Posterior cingulate gyrus (tissue), 11 donors: ENCODE measurements at regions of chr12 and their contacts with region 1.

Region 1: GRCh38 chr12:109775172-109775881 is 57.9 kb downstream of the TRPV4 start:
- DNase-seq: peak; percentile 65 to 97 (median 86)

Region 2: DNA sequence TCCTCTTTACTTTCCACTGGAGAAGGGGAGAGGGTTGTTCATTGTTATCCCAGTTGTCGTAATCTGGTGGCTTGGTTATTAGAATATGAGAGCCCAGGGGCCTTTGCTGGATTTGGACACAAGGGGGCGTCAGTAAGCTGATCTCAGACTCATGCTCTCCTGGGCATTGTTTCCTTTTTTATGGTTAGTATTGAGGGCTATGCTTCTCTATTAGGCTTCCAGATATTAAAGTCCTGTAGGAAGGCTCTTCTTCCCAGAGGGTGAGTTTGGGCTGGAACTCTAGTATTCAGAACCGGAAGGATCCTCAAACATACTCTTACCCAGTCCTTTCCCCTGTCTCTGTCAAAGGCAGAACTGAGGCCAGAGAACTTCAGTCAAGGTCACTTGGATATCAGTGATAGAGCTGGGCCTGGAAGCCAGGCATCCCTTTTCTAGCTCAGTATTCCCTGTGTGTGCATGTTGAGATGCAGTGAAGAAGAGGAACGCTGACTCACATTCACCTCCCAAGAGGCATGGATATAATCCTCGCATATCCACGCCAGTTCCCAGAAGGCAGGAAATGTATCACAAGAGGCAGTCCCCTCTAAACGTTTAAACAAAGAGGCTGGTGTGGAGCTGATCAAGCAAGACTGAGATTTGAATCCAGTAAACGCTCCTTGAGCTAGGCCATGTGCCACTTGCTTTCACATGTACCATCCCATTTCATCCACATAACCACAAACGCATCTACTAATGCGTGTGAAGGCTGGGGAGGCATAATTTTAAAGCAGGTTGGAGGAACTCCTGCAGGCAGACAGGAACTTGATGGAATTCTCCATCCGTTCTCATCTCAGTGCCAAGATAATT is 256.3 kb before region 1 on chr12:
- intact Hi-C with region 1: loop called (anchors 2 kb)
- DNase-seq: peak in 9 of 10 donors; percentile 35 to 94 (median 81)

Region 3: GRCh38 chr12:109580272-109580671 is 195.1 kb before region 1 on chr12:
- intact Hi-C with region 1: loop called (anchors 1 kb)
- DNase-seq: peak in 2 of 10 donors; percentile 37 to 62

Region 4: DNA sequence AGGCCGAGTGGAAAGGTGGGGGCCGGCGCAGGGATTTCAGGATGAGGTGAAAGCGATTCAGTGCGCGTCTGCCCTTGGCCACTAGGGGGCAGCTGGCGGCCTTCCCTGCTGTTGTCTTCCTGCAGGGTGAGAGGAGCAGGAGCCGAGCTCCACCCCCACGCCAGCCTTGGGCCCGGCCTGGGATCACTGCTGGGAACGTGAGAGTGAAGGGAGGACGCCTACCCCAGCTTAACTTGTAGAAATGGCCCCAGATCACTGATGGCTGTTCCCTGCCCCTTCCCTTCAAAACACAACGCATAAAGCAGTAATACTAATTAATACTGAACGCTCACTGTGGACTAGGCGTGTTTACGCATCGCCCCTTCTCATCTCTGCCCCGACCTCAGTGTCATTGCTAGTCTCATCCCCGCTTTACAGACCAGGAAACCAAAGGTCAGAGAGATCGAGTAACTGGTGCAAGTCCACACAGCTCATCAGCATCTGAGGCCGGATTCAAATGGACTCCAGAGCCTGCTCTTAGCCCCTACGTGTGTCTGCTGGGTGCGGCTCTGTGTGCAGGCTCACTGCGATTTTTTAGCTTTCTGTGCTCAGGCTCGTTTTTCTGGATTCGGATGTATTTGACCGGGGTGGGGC is 177.4 kb before region 1 on chr12:
- intact Hi-C with region 1: loop called (anchors 1 kb)
- DNase-seq: peak; percentile 82 to 99 (median 91)

Region 5: GRCh38 chr12:109719236-109720022 is 55.9 kb before region 1 on chr12:
- intact Hi-C with region 1: loop called (anchors 2 kb)
- DNase-seq: no peak

Region 6: GRCh38 chr12:109844983-109845823 is 69.9 kb after region 1 on chr12:
- intact Hi-C with region 1: no loop called
- DNase-seq: peak; percentile 69 to 97 (median 88)

Region 7: DNA sequence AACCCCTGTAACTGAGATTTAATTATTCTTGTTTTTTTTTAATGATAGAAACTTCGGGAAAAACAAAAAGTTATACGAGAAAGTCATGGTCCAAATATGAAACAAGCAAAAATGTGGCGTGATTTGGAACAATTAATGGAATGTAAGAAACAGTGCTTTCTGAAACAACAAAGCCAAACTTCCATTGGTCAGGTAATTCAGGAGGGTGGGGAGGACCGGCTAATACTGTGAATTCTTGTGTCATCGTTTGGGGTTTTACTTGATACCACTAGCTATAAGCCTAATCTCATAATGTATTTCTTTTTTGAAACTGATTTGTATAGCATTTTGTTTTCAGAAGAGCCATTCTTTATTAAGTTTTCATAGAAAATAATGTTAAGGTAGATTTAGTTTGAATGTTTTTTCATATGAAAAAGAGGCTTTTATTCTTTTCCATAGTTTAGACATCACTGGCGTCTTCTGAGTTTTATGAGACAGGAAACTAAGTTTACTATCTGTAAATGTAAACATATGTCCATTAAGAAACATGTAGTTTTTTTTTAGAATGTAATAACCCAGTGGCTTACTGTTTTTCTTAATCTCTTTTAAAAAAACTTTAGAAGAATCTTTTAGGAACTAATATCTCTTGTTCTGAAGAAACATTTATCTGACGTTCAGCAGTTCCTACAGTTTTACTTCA is 442.8 kb after region 1 on chr12:
- intact Hi-C with region 1: no loop called
- DNase-seq: no peak